Aorta (tissue), 5 donors: ENCODE measurements at regions of chr6 and their contacts with region 1.

Region 1: DNA sequence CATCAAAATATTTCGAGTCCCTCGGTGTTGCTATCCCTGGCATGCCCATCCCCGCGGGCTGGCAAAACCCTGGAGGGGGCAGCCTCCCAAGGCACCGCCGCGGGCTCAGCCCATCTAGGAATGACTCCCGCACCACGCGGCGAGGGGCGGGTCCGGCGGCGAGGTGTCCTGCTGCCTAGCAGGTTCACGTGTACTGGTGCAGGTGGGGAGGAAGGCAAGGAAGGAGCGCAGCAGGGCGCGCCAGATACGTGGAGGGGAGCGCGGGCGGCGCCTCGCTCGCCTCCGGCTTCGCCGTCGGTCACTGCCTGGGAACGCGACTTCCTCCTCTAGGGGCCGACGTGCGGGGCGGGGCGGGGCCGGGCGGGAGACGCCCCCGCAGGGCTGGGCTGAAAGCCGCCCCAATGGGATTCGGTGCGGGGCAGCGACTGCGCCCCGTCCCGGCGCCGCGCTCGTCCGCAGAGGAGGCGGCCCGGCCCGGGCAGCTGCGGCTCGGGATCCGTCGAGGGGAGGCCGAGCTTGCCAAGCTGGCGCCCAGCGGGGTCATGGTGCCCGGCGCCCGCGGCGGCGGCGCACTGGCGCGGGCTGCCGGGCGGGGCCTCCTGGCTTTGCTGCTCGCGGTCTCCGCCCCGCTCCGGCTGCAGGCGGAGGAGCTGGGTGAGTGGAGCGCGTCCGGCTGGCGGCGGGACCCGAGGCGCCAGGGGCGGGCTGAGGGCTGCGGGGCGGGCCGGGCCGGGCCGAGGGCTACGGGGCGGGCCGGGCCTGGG is at the start of gene DCBLD1:
- DNase-seq: peak; percentile 86 to 92
- ATAC-seq: peak; percentile 92
- H3K4me3 ChIP-seq: peak within 1 kb of the TSS; percentile 50 to 72
- H3K27ac ChIP-seq: peak within 1 kb of the TSS; percentile 50 to 89
- H3K4me1 ChIP-seq: no peaks in the 10 kb centered on the region
- H3K27me3 ChIP-seq: no peaks in the 10 kb centered on the region
- total RNA-seq, gene DCBLD1: 13.2 to 16.8 TPM

Region 2: GRCh38 chr6:117547688-117548621 is 65.5 kb after region 1 on chr6:
- intact Hi-C with region 1: loop called in 1 of 2 experiments (anchors 2 kb)
- DNase-seq: peak; percentile 81 to 87
- ATAC-seq: peak; percentile 87
- H3K4me3 ChIP-seq: peak overlapping the region in 1 of 2 donors; percentile 7
- H3K27ac ChIP-seq: peak overlapping the region in 1 of 2 donors; percentile 16
- H3K4me1 ChIP-seq: peaks cover 0 to 2% of the 10 kb centered on the region in 2 donors
- H3K27me3 ChIP-seq: no peaks in the 10 kb centered on the region

Region 3: DNA sequence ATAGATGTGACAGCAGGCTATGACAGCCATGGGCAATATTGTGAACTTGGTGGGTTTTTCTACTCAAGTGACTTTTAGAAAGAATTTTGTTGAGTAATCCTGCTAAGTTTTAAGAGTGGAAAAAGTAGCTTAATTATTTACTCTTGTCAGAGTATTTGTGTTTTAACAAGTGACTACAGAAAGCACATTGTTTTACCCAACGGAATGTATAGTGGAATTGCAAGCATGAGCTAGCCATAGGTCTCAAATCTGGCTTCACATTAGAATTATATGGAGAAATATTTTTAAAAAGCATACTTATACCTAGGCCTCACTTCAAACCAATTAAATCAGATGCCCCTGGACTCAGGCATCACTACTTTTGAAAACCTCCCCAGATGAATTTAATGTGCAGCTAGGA is 155.3 kb after region 1 on chr6:
- intact Hi-C with region 1: no loop called
- DNase-seq: no peak
- ATAC-seq: no peak
- H3K4me3 ChIP-seq: no peak overlapping the region
- H3K27ac ChIP-seq: no peak overlapping the region
- H3K4me1 ChIP-seq: no peaks in the 10 kb centered on the region
- H3K27me3 ChIP-seq: no peaks in the 10 kb centered on the region

Region 4: GRCh38 chr6:118893807-118894424 is 1411.5 kb after region 1 on chr6 and contains the start of gene ASF1A:
- intact Hi-C with region 1: loop called in 1 of 2 experiments (anchors 5 kb)
- DNase-seq: peak; percentile 98
- ATAC-seq: peak; percentile 96
- H3K4me3 ChIP-seq: peak within 1 kb of the TSS; percentile 91 to 92
- H3K27ac ChIP-seq: peak within 1 kb of the TSS; percentile 83 to 93
- H3K4me1 ChIP-seq: peaks cover 0 to 6% of the 10 kb centered on the region in 2 donors
- H3K27me3 ChIP-seq: no peaks in the 10 kb centered on the region
- total RNA-seq, gene ASF1A: 11.5 to 12.9 TPM